ENCODE measurements at regions of chr7 and their contacts with region 1.

Region 1: DNA sequence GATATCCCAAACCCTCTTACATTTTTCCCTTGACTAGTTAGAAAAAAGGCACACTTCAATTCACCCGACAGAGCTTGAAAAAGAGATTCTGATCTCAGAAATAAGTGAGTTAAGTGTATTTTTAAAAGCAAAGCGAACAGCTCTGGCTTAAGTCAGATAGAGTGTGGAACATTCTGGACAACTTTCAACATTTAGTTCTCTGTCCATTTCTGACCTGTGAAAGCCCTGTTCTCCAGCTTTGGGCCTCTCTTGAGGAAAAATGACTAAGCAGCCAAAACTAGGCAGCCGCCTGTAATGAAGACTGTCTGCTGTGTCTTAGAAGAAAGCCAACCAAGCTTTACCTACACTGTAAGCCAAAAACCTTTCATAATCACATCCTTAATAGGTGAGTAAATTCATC is 50.5 kb downstream of the CDK6 start:
- DNase-seq: no peak
- H3K4me3 Mint-ChIP-seq: no peak overlapping the region
- H3K27ac Mint-ChIP-seq: no peak overlapping the region
- H3K4me1 Mint-ChIP-seq: peaks cover 56% of the 10 kb centered on the region
- H3K27me3 Mint-ChIP-seq: no peaks in the 10 kb centered on the region

Region 2: DNA sequence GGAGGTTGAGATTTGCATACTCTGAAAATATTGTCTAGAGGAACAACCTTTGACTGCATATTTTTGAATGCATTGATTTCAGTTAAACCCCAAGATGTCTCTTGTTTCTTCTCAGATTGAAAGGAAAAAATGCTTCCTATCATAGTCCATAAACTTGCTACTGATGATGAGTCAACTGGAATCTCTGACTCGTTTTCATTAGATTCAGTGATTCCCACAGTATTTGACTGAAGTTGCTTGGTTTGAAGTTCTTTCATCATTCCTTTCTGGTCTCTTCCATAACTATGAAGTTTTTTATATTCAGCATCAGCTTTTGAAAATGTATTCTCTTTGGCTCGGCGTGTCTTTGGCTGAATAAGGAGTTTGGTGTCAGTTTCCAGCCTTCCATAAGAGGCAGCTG is 268.3 kb before region 1 on chr7:
- CTCF ChIA-PET with region 1: no interaction called
- intact Hi-C with region 1: no loop called
- DNase-seq: no peak
- H3K4me3 Mint-ChIP-seq: no peak overlapping the region
- H3K27ac Mint-ChIP-seq: peak overlapping the region; percentile 64
- H3K4me1 Mint-ChIP-seq: peaks cover 9% of the 10 kb centered on the region
- H3K27me3 Mint-ChIP-seq: no peaks in the 10 kb centered on the region

Region 3: DNA sequence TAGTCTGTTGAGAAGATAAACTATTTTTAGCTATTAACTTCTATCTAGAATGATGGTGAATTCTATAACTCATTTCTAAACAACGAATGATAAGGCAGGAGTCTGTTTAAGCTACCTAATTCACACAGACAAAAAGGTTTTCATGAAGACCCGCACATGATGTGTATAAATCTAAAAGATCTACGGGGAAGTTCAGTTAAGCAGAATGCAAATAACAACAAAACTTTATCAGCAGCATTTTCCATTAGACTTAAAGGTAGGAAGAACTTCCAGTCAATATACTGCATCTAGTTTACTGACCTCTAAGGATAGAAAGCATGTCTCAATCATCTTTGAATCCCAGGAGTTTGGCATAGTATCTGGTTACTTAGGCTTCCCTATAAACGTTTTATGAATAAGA is 12.1 kb before region 1 on chr7:
- CTCF ChIA-PET with region 1: interaction called, 3 read pairs
- intact Hi-C with region 1: loop called (anchors 1 kb)
- DNase-seq: no peak
- H3K4me3 Mint-ChIP-seq: no peak overlapping the region
- H3K27ac Mint-ChIP-seq: no peak overlapping the region
- H3K4me1 Mint-ChIP-seq: peaks cover 45% of the 10 kb centered on the region
- H3K27me3 Mint-ChIP-seq: no peaks in the 10 kb centered on the region